GM12878 (cell line): ENCODE measurements at regions of chr11 and their contacts with region 1.

Region 1: GRCh38 chr11:48109046-48109666 is 107.5 kb upstream of the OR4B1 start:
- DNase-seq: no peak
- ATAC-seq: peak; percentile 10; the same call in 2 of the 3 replicates
- H3K4me3 ChIP-seq: peak overlapping the region; percentile 37; the same call in 1 of the 2 replicates
- H3K27ac ChIP-seq: peak overlapping the region; percentile 57
- H3K4me1 ChIP-seq: peaks cover 45% of the 10 kb centered on the region
- H3K27me3 ChIP-seq: no peaks in the 10 kb centered on the region
- CTCF ChIP-seq: peak; percentile 14 to 45 (median 43); a peak in 5 of 6 replicates
- EP300 ChIP-seq: no peak
- POLR2A ChIP-seq: no peak
- RAD21 ChIP-seq: peak; percentile 73

Region 2: GRCh38 chr11:47858169-47858543 is 251.0 kb before region 1 on chr11:
- CTCF ChIA-PET with region 1: interaction called, 17 read pairs
- POLR2A ChIA-PET with region 1: no interaction called
- RAD21 ChIA-PET with region 1: interaction called, 25 read pairs
- SMC1A ChIA-PET with region 1: interaction called, 26 read pairs
- in situ Hi-C with region 1: no loop called
- intact Hi-C with region 1: loop called (anchors 1 kb)
- DNase-seq: no peak
- ATAC-seq: no peak
- H3K4me3 ChIP-seq: no peak overlapping the region
- H3K27ac ChIP-seq: peak overlapping the region; percentile 41; the same call in 1 of the 2 replicates
- H3K4me1 ChIP-seq: peaks cover 66% of the 10 kb centered on the region
- H3K27me3 ChIP-seq: no peaks in the 10 kb centered on the region
- CTCF ChIP-seq: no peak
- EP300 ChIP-seq: no peak
- POLR2A ChIP-seq: no peak
- RAD21 ChIP-seq: no peak

Region 3: DNA sequence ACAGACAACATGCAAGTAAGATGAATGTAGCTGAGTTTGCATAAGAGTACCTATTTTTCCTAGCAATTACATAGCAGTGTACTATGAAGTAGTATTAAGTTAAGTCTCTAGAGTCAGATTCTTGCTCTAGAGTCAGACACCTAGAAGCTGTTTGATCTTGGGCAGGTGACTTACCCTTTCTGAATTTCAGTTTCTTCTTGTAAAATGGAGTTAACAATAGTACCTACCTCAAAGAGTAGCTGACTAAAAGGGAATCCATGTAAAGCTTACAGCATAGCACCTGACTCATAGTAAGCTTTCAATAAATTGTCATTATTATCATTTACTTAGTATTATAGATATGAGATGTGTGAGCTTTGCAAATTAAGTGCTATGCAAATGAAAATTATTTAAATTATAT is 176.6 kb before region 1 on chr11:
- CTCF ChIA-PET with region 1: interaction called, 244 read pairs
- POLR2A ChIA-PET with region 1: interaction called, 3 read pairs
- RAD21 ChIA-PET with region 1: interaction called, 171 read pairs
- SMC1A ChIA-PET with region 1: interaction called, 234 read pairs
- in situ Hi-C with region 1: loop called (anchors 10 kb)
- intact Hi-C with region 1: loop called (anchors 1 kb)
- DNase-seq: no peak
- ATAC-seq: peak; percentile 54; the same call in 2 of the 3 replicates
- H3K4me3 ChIP-seq: no peak overlapping the region
- H3K27ac ChIP-seq: no peak overlapping the region
- H3K4me1 ChIP-seq: peaks cover 4% of the 10 kb centered on the region
- H3K27me3 ChIP-seq: peaks cover 0 to 2% of the 10 kb centered on the region in 2 experiments; a peak in 2 of 4 replicates
- CTCF ChIP-seq: no peak
- EP300 ChIP-seq: no peak
- POLR2A ChIP-seq: no peak
- RAD21 ChIP-seq: no peak

Region 4: DNA sequence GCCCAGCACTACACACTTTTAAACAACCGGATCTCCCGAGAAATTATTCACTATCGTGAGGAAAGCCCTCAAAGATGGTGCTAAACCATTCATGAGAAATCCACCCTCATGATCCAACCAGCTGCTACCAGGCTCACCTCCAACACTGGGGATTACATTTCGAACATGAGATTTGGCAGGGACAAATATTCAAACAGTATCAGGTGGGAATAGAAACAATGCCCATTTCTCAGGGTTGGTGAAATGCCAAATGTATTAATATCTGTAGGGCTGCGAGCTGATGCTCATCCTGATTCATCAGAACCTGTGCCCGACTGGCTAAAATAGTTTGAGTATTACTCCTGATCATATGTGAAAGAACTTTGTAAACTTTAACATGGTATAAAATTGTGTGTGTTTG is 144.6 kb before region 1 on chr11:
- CTCF ChIA-PET with region 1: interaction called, 14 read pairs
- POLR2A ChIA-PET with region 1: no interaction called
- RAD21 ChIA-PET with region 1: interaction called, 8 read pairs
- SMC1A ChIA-PET with region 1: interaction called, 5 read pairs
- in situ Hi-C with region 1: no loop called
- intact Hi-C with region 1: no loop called
- DNase-seq: no peak
- ATAC-seq: no peak
- H3K4me3 ChIP-seq: no peak overlapping the region
- H3K27ac ChIP-seq: no peak overlapping the region
- H3K4me1 ChIP-seq: no peaks in the 10 kb centered on the region
- H3K27me3 ChIP-seq: no peaks in the 10 kb centered on the region
- CTCF ChIP-seq: no peak
- EP300 ChIP-seq: no peak
- POLR2A ChIP-seq: no peak
- RAD21 ChIP-seq: no peak

Region 5: DNA sequence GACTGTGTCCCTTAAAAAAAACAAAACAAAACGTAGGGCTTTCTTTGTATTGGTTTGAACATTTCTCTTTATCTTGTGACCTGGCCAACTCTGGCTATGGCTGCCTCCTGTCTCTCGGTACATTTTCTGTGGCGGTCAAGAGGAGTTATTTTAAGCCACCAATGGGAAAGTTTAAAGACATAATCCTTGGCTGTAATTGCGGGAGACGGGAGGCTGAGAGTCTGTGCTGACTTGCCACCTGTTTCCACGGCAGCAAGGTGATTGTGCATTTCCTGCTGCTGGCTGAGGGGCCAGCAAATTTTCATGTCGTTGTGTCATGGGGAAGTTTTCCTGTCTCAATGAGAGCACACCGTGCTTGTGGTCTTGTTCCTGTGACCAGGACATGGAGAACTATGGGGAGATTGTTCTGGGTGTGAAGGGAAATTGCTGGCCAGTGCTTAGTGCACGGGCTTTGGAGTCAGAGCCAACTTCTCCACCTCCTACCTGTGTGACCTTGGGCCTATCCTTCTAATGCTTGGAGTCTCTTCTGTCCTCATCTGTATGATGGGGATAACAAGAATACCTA is 117.8 kb before region 1 on chr11:
- CTCF ChIA-PET with region 1: interaction called, 6 read pairs
- POLR2A ChIA-PET with region 1: no interaction called
- RAD21 ChIA-PET with region 1: interaction called, 4 read pairs
- SMC1A ChIA-PET with region 1: interaction called, 3 read pairs
- in situ Hi-C with region 1: loop called (anchors 5 kb)
- intact Hi-C with region 1: no loop called
- DNase-seq: no peak
- ATAC-seq: no peak; the same call in 2 of the 3 replicates
- H3K4me3 ChIP-seq: peak overlapping the region; percentile 50; the same call in 1 of the 2 replicates
- H3K27ac ChIP-seq: peak overlapping the region; percentile 74
- H3K4me1 ChIP-seq: peaks cover 37% of the 10 kb centered on the region
- H3K27me3 ChIP-seq: no peaks in the 10 kb centered on the region; a peak in 1 of 4 replicates
- CTCF ChIP-seq: no peak
- EP300 ChIP-seq: no peak
- POLR2A ChIP-seq: no peak
- RAD21 ChIP-seq: no peak

Region 6: DNA sequence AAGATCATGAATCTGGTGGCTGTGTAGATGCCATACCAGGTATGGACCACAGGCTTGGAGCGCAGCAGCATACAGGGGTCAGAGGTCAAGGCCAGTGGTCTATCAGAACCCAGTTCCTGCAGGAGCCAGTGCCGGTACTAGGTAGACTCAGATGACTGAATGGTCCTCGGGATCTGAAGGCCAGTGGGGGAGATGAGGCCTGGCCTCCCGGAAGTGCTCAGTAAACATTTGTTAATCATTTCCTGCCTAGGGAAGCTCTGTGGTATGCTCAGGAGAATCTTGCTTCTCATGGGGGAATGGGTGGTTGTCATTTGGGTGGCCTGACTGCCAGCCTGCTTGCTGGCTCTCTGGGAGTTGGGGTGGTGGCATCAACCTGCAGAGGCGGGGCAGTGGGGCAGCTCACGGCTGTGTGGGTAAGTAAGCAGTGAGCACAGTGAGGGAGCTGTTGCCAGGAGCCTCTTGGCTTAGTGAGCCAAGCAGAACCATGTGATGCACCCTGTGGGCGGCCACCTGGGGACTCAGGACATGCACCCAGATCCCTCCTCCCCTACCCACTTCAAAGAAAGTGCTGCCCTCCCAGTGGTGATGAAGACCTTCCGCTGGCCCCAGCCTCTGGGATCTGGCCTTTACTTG is 95.8 kb before region 1 on chr11:
- CTCF ChIA-PET with region 1: interaction called, 14 read pairs
- POLR2A ChIA-PET with region 1: no interaction called
- RAD21 ChIA-PET with region 1: interaction called, 19 read pairs
- SMC1A ChIA-PET with region 1: interaction called, 3 read pairs
- in situ Hi-C with region 1: no loop called
- intact Hi-C with region 1: loop called (anchors 5 kb)
- DNase-seq: no peak
- ATAC-seq: peak; percentile 68
- H3K4me3 ChIP-seq: no peak overlapping the region
- H3K27ac ChIP-seq: peak overlapping the region; percentile 39
- H3K4me1 ChIP-seq: peaks cover 74% of the 10 kb centered on the region
- H3K27me3 ChIP-seq: no peaks in the 10 kb centered on the region
- CTCF ChIP-seq: no peak
- EP300 ChIP-seq: no peak
- POLR2A ChIP-seq: peak; percentile 58
- RAD21 ChIP-seq: no peak

Region 7: GRCh38 chr11:48093795-48094642 is 15.1 kb before region 1 on chr11:
- CTCF ChIA-PET with region 1: interaction called, 3 read pairs
- POLR2A ChIA-PET with region 1: interaction called, 5 read pairs
- RAD21 ChIA-PET with region 1: interaction called, 4 read pairs
- SMC1A ChIA-PET with region 1: interaction called, 22 read pairs
- in situ Hi-C with region 1: no loop called
- intact Hi-C with region 1: no loop called
- DNase-seq: no peak
- ATAC-seq: peak; percentile 66
- H3K4me3 ChIP-seq: no peak overlapping the region
- H3K27ac ChIP-seq: no peak overlapping the region
- H3K4me1 ChIP-seq: peaks cover 16% of the 10 kb centered on the region
- H3K27me3 ChIP-seq: no peaks in the 10 kb centered on the region
- CTCF ChIP-seq: no peak
- EP300 ChIP-seq: no peak
- POLR2A ChIP-seq: no peak
- RAD21 ChIP-seq: no peak

Region 8: DNA sequence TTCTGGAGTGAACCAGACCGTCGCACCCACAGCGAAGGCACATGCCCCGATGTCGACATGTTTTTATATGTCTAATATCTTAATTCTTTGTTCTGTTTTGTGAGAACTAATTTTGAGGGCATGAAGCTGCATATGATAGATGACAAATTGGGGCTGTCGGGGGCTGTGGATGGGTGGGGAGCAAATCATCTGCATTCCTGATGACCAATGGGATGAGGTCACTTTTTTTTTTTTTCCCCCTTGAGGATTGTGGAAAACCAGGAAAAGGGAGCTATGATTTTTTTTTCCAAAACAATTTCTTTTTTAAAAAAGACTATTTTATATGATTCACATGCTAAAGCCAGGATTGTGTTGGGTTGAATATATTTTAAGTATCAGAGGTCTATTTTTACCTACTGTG is 58.2 kb after region 1 on chr11:
- CTCF ChIA-PET with region 1: no interaction called
- POLR2A ChIA-PET with region 1: no interaction called
- RAD21 ChIA-PET with region 1: no interaction called
- SMC1A ChIA-PET with region 1: no interaction called
- in situ Hi-C with region 1: no loop called
- intact Hi-C with region 1: no loop called
- DNase-seq: no peak
- ATAC-seq: no peak
- H3K4me3 ChIP-seq: no peak overlapping the region
- H3K27ac ChIP-seq: no peak overlapping the region
- H3K4me1 ChIP-seq: peaks cover 4% of the 10 kb centered on the region; the same call in 1 of the 2 replicates
- H3K27me3 ChIP-seq: no peaks in the 10 kb centered on the region
- CTCF ChIP-seq: no peak
- EP300 ChIP-seq: no peak
- POLR2A ChIP-seq: no peak
- RAD21 ChIP-seq: no peak

Region 9: DNA sequence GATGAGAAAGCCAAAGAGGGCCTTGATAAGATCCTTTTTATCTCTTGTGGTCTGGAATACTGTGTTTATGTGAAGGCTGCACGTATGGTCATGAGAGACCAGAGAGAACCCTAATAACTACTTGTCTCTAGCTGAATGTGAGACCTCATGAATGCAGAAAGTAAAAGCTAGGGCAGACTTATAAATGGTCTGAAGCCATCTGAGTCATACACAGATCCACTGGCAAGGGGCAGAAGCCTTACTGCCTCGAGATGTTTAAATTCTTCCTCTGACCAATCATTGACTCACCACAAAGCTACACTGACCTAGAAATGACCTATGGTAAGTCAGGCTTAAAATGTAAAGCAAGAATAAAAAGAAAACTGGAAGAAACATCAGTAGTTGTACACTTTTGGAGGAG is 84.7 kb after region 1 on chr11:
- CTCF ChIA-PET with region 1: no interaction called
- POLR2A ChIA-PET with region 1: no interaction called
- RAD21 ChIA-PET with region 1: no interaction called
- SMC1A ChIA-PET with region 1: no interaction called
- in situ Hi-C with region 1: no loop called
- intact Hi-C with region 1: no loop called
- DNase-seq: no peak
- ATAC-seq: no peak
- H3K4me3 ChIP-seq: no peak overlapping the region
- H3K27ac ChIP-seq: no peak overlapping the region
- H3K4me1 ChIP-seq: no peaks in the 10 kb centered on the region
- H3K27me3 ChIP-seq: no peaks in the 10 kb centered on the region
- CTCF ChIP-seq: no peak
- EP300 ChIP-seq: no peak
- POLR2A ChIP-seq: no peak
- RAD21 ChIP-seq: no peak